ENCODE measurements at regions of chr16 and their contacts with region 1.

Region 1: GRCh38 chr16:11396241-11397048 is 51.2 kb downstream of the RMI2 start:
- DNase-seq: peak; percentile 75 to 85
- ATAC-seq: peak; percentile 84 to 92 (median 88)
- H3K4me3 ChIP-seq: no peak overlapping the region
- H3K27ac ChIP-seq: no peak overlapping the region
- H3K4me1 ChIP-seq: peaks cover 5% of the 10 kb centered on the region
- H3K27me3 ChIP-seq: no peaks in the 10 kb centered on the region
- CTCF ChIP-seq: peak; percentile 98

Region 2: GRCh38 chr16:10256784-10257641 is 1139.4 kb before region 1 on chr16:
- intact Hi-C with region 1: no loop called
- DNase-seq: peak in 1 of 2 donors; percentile 26
- ATAC-seq: peak in 2 of 4 donors; percentile 57 to 65
- H3K4me3 ChIP-seq: no peak overlapping the region
- H3K27ac ChIP-seq: no peak overlapping the region
- H3K4me1 ChIP-seq: no peaks in the 10 kb centered on the region
- H3K27me3 ChIP-seq: no peaks in the 10 kb centered on the region
- CTCF ChIP-seq: peak; percentile 57

Region 3: GRCh38 chr16:11484691-11485258 is 88.3 kb after region 1 on chr16:
- intact Hi-C with region 1: loop called in 1 of 2 experiments (anchors 5 kb)
- DNase-seq: peak in 1 of 2 donors; percentile 23
- ATAC-seq: peak in 1 of 4 donors; percentile 19
- H3K4me3 ChIP-seq: no peak overlapping the region
- H3K27ac ChIP-seq: no peak overlapping the region
- H3K4me1 ChIP-seq: no peaks in the 10 kb centered on the region
- H3K27me3 ChIP-seq: no peaks in the 10 kb centered on the region
- CTCF ChIP-seq: no peak

Region 4: DNA sequence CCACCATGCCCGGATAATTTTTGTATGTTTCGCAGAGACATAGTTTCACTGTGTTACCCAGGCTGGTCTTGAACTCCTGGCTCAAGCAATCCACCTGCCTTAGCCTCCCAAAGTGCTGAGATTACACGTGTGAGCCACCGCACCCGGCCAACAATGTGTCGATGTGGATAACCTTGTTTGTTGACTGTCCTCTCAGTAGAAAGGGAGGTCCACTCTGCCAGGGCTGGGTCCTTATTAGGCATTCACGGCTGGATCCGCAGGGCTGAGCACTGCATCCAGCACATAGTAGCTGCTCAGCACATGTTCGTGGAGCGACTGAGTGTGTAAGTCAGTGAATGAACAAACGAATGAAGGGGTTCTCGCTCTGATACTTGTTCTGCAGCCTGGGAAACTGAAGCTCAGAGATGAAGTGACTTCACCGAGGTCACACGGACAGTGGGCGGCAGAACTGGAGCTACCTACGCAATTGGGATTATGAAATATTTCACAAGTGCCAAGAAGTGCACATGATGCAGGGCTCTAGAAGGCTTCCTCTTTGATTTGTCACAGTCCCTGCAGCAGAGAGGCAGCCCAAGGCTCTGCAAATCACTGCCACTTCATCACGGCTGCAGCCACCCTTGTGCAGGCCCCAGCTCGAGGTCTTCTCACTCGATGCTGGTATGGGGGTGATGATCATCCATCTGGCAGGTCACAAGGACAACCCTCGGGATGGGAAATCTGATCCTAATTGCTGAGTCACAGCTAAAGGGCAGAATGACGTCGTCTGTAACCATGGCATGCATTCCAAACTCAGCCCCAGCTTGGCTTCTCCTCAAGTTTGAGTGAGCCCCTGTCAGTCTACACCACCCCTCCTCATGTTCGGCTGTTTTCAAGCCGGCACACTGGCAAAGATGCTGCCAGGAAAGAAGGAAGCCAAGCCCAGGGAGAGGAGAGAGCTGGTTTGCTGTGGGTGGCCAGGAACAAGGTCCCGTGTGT is 243.8 kb after region 1 on chr16:
- intact Hi-C with region 1: loop called (anchors 5 kb)
- DNase-seq: peak; percentile 86 to 89
- ATAC-seq: peak; percentile 90 to 94 (median 92)
- H3K4me3 ChIP-seq: peak overlapping the region; percentile 35
- H3K27ac ChIP-seq: peak overlapping the region; percentile 93
- H3K4me1 ChIP-seq: peaks cover 23% of the 10 kb centered on the region
- H3K27me3 ChIP-seq: no peaks in the 10 kb centered on the region
- CTCF ChIP-seq: no peak

Region 5: DNA sequence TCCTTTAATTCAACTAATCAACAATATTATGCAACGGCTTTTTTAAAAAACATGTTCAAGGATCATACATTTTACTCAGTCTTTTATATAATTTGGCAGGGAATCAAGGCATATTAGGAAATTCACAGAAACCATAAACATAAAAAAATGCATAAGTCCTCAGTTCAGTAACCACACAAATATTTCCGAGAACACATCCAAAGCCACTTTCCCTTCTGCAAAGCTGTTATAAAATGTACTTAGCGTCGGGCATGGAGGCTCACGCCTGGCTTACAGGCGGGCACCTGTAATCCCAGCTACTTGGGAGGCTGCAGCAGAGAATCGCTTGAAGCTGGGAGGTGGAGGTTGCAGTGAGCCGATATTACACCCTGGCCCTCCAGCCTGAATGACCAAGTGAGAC is 410.3 kb after region 1 on chr16:
- intact Hi-C with region 1: loop called in 1 of 2 experiments (anchors 5 kb)
- DNase-seq: no peak
- ATAC-seq: no peak
- H3K4me3 ChIP-seq: no peak overlapping the region
- H3K27ac ChIP-seq: no peak overlapping the region
- H3K4me1 ChIP-seq: no peaks in the 10 kb centered on the region
- H3K27me3 ChIP-seq: no peaks in the 10 kb centered on the region
- CTCF ChIP-seq: no peak

Region 6: GRCh38 chr16:12067714-12068401 is 671.4 kb after region 1 on chr16:
- intact Hi-C with region 1: loop called (anchors 10 kb)
- DNase-seq: peak in 1 of 2 donors; percentile 23
- ATAC-seq: peak; percentile 78 to 90 (median 80)
- H3K4me3 ChIP-seq: no peak overlapping the region
- H3K27ac ChIP-seq: no peak overlapping the region
- H3K4me1 ChIP-seq: peaks cover 6% of the 10 kb centered on the region
- H3K27me3 ChIP-seq: no peaks in the 10 kb centered on the region
- CTCF ChIP-seq: peak; percentile 93

Measured in psoas muscle (tissue), 8 donors.